PC-9 (cell line): ENCODE measurements at regions of chr9 and their contacts with region 1.

Region 1: GRCh38 chr9:134024828-134025605 is at the start of gene BRD3OS:
- DNase-seq: peak; percentile 88 to 97
- H3K4me3 ChIP-seq: peak within 1 kb of the TSS; percentile 72
- H3K27ac ChIP-seq: no peak within 1 kb of the TSS
- H3K4me1 ChIP-seq: peaks cover 10% of the 10 kb centered on the region
- H3K27me3 ChIP-seq: no peaks in the 10 kb centered on the region
- CTCF ChIP-seq: no peak
- total RNA-seq, gene BRD3OS: 23.7 and 26.2 TPM in 2 replicates

Region 2: GRCh38 chr9:133485361-133486260 is 539.4 kb before region 1 on chr9:
- CTCF ChIA-PET with region 1: interaction called, 11 read pairs
- POLR2A ChIA-PET with region 1: no interaction called
- intact Hi-C with region 1: no loop called
- DNase-seq: no peak
- H3K4me3 ChIP-seq: peak overlapping the region; percentile 7; the same call in 1 of the 2 replicates
- H3K27ac ChIP-seq: no peak overlapping the region
- H3K4me1 ChIP-seq: peaks cover 38% of the 10 kb centered on the region
- H3K27me3 ChIP-seq: peaks cover 20% of the 10 kb centered on the region
- CTCF ChIP-seq: no peak

Region 3: GRCh38 chr9:133889584-133890301 is 135.3 kb before region 1 on chr9:
- CTCF ChIA-PET with region 1: no interaction called
- POLR2A ChIA-PET with region 1: no interaction called
- intact Hi-C with region 1: no loop called
- DNase-seq: peak in 1 of 2 experiments; percentile 16
- H3K4me3 ChIP-seq: no peak overlapping the region
- H3K27ac ChIP-seq: no peak overlapping the region
- H3K4me1 ChIP-seq: no peaks in the 10 kb centered on the region
- H3K27me3 ChIP-seq: no peaks in the 10 kb centered on the region
- CTCF ChIP-seq: no peak

Region 4: GRCh38 chr9:133992780-133993634 is 32.0 kb before region 1 on chr9:
- CTCF ChIA-PET with region 1: interaction called, 11 read pairs
- POLR2A ChIA-PET with region 1: no interaction called
- intact Hi-C with region 1: loop called (anchors 2 kb)
- DNase-seq: peak; percentile 66 to 82
- H3K4me3 ChIP-seq: peak overlapping the region; percentile 98
- H3K27ac ChIP-seq: peak overlapping the region; percentile 65
- H3K4me1 ChIP-seq: peaks cover 17% of the 10 kb centered on the region
- H3K27me3 ChIP-seq: no peaks in the 10 kb centered on the region
- CTCF ChIP-seq: peak; percentile 63

Region 5: DNA sequence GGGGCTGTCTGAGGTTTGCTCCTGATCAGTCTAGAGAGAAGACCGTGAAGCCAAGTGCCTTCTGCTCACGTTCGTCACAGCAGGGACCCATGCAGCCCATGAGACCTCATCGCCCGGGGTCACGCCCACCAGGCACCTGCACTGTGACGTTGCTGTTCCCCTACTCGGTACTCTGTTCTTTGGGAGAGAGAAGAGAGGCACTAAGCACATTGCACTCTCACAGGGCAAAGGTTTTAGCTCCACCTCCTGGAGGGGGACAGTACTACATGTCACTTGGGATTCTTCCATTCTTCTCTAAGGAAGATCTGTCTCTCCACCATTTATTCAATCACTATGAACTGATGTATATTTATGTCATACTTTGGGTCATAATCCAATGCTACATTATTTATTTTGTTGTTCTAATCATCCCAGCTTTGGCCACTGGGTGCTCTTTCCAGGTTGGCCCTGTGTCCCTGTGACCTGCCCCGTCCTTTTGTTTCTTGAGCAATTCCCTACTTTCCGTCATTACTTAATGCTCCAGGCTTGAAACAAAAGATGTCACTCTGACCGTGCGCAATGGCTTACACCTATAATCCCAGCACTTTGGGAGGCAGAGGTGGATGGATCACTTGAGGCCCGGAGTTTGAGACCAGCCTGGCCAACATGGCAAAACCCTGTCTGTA is 74.2 kb after region 1 on chr9:
- CTCF ChIA-PET with region 1: no interaction called
- POLR2A ChIA-PET with region 1: no interaction called
- intact Hi-C with region 1: loop called (anchors 2 kb)
- DNase-seq: peak; percentile 61 to 66
- H3K4me3 ChIP-seq: no peak overlapping the region
- H3K27ac ChIP-seq: no peak overlapping the region
- H3K4me1 ChIP-seq: no peaks in the 10 kb centered on the region
- H3K27me3 ChIP-seq: peaks cover 79% of the 10 kb centered on the region
- CTCF ChIP-seq: peak; percentile 91

Region 6: DNA sequence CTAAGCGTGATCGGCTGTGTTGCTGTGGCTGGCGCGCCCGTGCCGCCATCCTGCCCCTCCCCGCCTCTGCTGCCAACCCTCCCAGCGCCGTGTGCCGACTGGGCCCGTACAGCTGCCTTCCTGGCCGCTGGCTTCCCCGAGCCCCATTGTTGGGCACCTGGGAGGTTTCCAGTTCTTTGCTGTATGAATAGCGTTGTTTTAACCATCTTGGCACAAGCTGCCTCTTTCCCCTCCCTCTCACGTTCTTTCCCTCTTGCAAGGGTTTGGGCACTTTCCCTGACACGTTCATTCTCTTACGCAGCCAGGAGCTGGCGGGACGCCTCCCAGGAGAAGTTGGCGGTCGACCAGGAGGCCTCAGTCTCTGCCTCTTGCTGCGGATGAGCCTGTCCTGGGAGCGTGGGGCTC is 258.1 kb after region 1 on chr9:
- CTCF ChIA-PET with region 1: no interaction called
- POLR2A ChIA-PET with region 1: no interaction called
- intact Hi-C with region 1: no loop called
- DNase-seq: peak in 1 of 2 experiments; percentile 53
- H3K4me3 ChIP-seq: no peak overlapping the region
- H3K27ac ChIP-seq: no peak overlapping the region
- H3K4me1 ChIP-seq: no peaks in the 10 kb centered on the region; the same call in 1 of the 2 replicates
- H3K27me3 ChIP-seq: peaks cover 21% of the 10 kb centered on the region
- CTCF ChIP-seq: no peak

Region 7: GRCh38 chr9:134294191-134295071 is 269.4 kb after region 1 on chr9:
- CTCF ChIA-PET with region 1: no interaction called
- POLR2A ChIA-PET with region 1: interaction called, 22 read pairs
- intact Hi-C with region 1: no loop called
- DNase-seq: no peak
- H3K4me3 ChIP-seq: no peak overlapping the region
- H3K27ac ChIP-seq: no peak overlapping the region
- H3K4me1 ChIP-seq: no peaks in the 10 kb centered on the region
- H3K27me3 ChIP-seq: peaks cover 50% of the 10 kb centered on the region
- CTCF ChIP-seq: no peak